Naive thymus-derived CD4-positive, alpha-beta T cell (primary cell): ENCODE measurements at regions of chr11 and their contacts with region 1.

Region 1: DNA sequence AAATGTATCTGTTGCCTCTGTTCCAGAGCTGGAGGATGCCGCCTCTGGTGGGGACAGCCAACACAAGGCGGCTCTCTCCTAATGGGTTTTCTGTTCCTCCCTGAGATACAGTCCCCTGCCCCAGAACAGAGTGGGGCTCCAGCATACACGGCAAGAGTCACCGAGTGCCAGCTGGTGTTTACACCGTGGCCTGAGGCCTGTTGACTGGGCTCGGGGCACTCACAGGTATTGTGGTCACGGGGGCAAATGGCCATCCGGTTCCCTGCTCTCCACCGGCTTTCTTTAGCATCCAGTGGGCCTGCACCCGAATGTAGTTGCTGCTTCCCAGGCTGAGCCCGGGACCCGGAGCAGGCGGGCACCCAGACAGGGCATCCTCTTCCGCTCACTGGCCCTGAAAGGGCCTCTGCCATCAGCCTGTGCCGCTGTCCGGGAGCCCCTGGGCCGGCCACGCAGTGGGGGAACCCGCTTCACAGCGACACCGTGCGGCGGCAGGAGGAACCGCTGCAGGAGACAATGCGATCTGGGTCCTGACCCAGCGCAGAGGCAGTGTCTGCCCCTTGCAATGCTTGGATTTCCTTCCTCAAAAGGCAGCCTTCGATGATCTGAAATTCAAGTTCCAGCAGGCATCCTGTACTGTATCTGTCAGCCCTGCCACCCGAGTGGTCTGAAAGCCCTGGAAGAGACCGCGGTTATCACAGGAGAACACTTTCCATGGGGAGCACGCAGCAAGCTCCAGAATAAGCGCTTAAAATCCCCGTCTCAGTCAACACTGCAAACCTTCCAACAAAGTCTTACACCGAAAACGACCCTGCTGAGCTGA is 859 bp upstream of the KRTAP5-5 start:
- DNase-seq: peak; percentile 27 to 66 (median 52)
- ATAC-seq: peak; percentile 91
- H3K4me3 ChIP-seq: no peak overlapping the region
- H3K4me3 Mint-ChIP-seq: peak overlapping the region in 2 of 10 donors; percentile 4 to 29
- H3K27ac ChIP-seq: no peak overlapping the region
- H3K27ac Mint-ChIP-seq: no peak overlapping the region
- H3K4me1 ChIP-seq: peaks cover 0 to 7% of the 10 kb centered on the region in 2 donors
- H3K4me1 Mint-ChIP-seq: peaks cover 0 to 17% (median 4%) of the 10 kb centered on the region in 7 donors
- H3K27me3 ChIP-seq: no peaks in the 10 kb centered on the region
- H3K27me3 Mint-ChIP-seq: peaks cover 14 to 19% (median 16%) of the 10 kb centered on the region in 5 donors

Region 2: GRCh38 chr11:1202776-1203504 is 425.8 kb before region 1 on chr11:
- CTCF ChIA-PET with region 1: no interaction called
- POLR2A ChIA-PET with region 1: no interaction called
- intact Hi-C with region 1: loop called in 1 of 2 experiments (anchors 5 kb)
- DNase-seq: peak in 8 of 9 donors; percentile 34 to 73 (median 60)
- ATAC-seq: peak; percentile 83
- H3K4me3 ChIP-seq: no peak overlapping the region
- H3K4me3 Mint-ChIP-seq: no peak overlapping the region
- H3K27ac ChIP-seq: no peak overlapping the region
- H3K27ac Mint-ChIP-seq: no peak overlapping the region
- H3K4me1 ChIP-seq: no peaks in the 10 kb centered on the region
- H3K4me1 Mint-ChIP-seq: no peaks in the 10 kb centered on the region
- H3K27me3 ChIP-seq: no peaks in the 10 kb centered on the region
- H3K27me3 Mint-ChIP-seq: no peaks in the 10 kb centered on the region

Region 3: DNA sequence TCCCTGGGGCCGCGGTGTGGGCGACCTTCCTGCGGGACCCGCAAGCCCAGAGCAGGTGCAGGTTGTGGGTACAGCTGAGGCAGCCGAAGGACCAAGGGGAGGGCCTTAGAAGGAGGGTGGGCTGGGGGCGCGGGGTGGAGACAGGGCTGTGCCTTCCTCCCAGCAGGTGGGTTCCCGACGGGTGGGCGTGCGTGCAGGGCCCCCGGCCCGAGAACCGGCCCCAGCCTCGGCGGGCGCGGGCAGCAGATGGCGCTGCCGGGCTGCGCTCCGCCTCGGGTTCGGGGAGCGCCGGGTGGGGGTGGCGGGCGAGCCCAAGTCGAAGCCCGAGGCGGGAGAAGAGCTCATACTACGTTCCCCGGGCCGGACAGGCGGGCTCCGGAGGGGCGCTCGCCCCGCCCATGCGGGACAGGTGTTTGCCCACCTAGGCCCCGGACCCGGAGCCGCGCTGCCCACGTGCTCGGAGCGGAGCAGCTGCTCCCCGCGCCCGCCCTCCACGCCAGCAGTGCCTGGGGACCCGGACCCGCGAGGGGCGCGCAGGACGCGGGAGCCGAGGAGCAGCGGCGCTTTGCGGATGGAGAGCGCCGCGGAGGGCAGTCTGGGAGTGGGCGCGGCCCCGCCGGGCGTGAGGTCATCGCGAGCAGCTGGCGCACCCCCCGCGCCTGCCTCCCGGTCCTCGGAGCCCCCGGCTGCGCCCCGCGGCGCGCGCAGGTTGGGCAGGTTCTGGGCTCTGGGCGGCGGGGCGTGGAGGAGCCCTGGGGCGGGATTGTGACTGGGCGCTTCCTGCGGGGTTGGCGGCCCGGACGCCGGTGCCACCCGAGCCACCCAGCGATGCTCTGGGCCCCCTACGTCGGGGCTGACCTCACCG is 81.9 kb before region 1 on chr11:
- CTCF ChIA-PET with region 1: interaction called, 4 read pairs
- POLR2A ChIA-PET with region 1: no interaction called
- intact Hi-C with region 1: loop called (anchors 2 kb)
- DNase-seq: peak in 6 of 9 donors; percentile 46 to 65 (median 55)
- ATAC-seq: peak; percentile 79
- H3K4me3 ChIP-seq: no peak overlapping the region
- H3K4me3 Mint-ChIP-seq: peak overlapping the region in 7 of 10 donors; percentile 10 to 73 (median 37)
- H3K27ac ChIP-seq: no peak overlapping the region
- H3K27ac Mint-ChIP-seq: no peak overlapping the region
- H3K4me1 ChIP-seq: peaks cover 2 to 17% of the 10 kb centered on the region in 2 donors
- H3K4me1 Mint-ChIP-seq: peaks cover 0 to 9% (median 0%) of the 10 kb centered on the region in 7 donors
- H3K27me3 ChIP-seq: peaks cover 0 to 11% of the 10 kb centered on the region in 2 donors
- H3K27me3 Mint-ChIP-seq: peaks cover 14 to 50% (median 20%) of the 10 kb centered on the region in 5 donors

Region 4: GRCh38 chr11:1586699-1587098 is 42.0 kb before region 1 on chr11:
- CTCF ChIA-PET with region 1: no interaction called
- POLR2A ChIA-PET with region 1: no interaction called
- intact Hi-C with region 1: no loop called
- DNase-seq: no peak
- ATAC-seq: no peak
- H3K4me3 ChIP-seq: no peak overlapping the region
- H3K4me3 Mint-ChIP-seq: no peak overlapping the region
- H3K27ac ChIP-seq: no peak overlapping the region
- H3K27ac Mint-ChIP-seq: peak overlapping the region in 3 of 9 donors; percentile 17 to 41 (median 36)
- H3K4me1 ChIP-seq: peaks cover 23 to 26% of the 10 kb centered on the region in 2 donors
- H3K4me1 Mint-ChIP-seq: peaks cover 12 to 46% (median 26%) of the 10 kb centered on the region in 7 donors
- H3K27me3 ChIP-seq: no peaks in the 10 kb centered on the region
- H3K27me3 Mint-ChIP-seq: peaks cover 0 to 30% (median 12%) of the 10 kb centered on the region in 5 donors

Region 5: GRCh38 chr11:1598816-1599215 is 29.9 kb before region 1 on chr11:
- CTCF ChIA-PET with region 1: interaction called, 4 read pairs
- POLR2A ChIA-PET with region 1: no interaction called
- intact Hi-C with region 1: loop called in 1 of 2 experiments (anchors 1 kb)
- DNase-seq: no peak
- ATAC-seq: no peak
- H3K4me3 ChIP-seq: no peak overlapping the region
- H3K4me3 Mint-ChIP-seq: no peak overlapping the region
- H3K27ac ChIP-seq: no peak overlapping the region
- H3K27ac Mint-ChIP-seq: no peak overlapping the region
- H3K4me1 ChIP-seq: peaks cover 0 to 5% of the 10 kb centered on the region in 2 donors
- H3K4me1 Mint-ChIP-seq: peaks cover 5 to 14% (median 8%) of the 10 kb centered on the region in 7 donors
- H3K27me3 ChIP-seq: no peaks in the 10 kb centered on the region
- H3K27me3 Mint-ChIP-seq: peaks cover 46 to 80% (median 57%) of the 10 kb centered on the region in 5 donors

Region 6: GRCh38 chr11:1882519-1883238 is 254.0 kb after region 1 on chr11:
- CTCF ChIA-PET with region 1: no interaction called
- POLR2A ChIA-PET with region 1: no interaction called
- intact Hi-C with region 1: no loop called
- DNase-seq: peak; percentile 65 to 87 (median 80)
- ATAC-seq: peak; percentile 89
- H3K4me3 ChIP-seq: no peak overlapping the region
- H3K4me3 Mint-ChIP-seq: no peak overlapping the region
- H3K27ac ChIP-seq: peak overlapping the region; percentile 46
- H3K27ac Mint-ChIP-seq: peak overlapping the region in 4 of 9 donors; percentile 20 to 60 (median 48)
- H3K4me1 ChIP-seq: peaks cover 0 to 3% of the 10 kb centered on the region in 2 donors
- H3K4me1 Mint-ChIP-seq: peaks cover 6 to 27% (median 13%) of the 10 kb centered on the region in 7 donors
- H3K27me3 ChIP-seq: no peaks in the 10 kb centered on the region
- H3K27me3 Mint-ChIP-seq: no peaks in the 10 kb centered on the region